Sigmoid colon (tissue), 7 donors: ENCODE measurements at regions of chr14 and their contacts with region 1.

Region 1: DNA sequence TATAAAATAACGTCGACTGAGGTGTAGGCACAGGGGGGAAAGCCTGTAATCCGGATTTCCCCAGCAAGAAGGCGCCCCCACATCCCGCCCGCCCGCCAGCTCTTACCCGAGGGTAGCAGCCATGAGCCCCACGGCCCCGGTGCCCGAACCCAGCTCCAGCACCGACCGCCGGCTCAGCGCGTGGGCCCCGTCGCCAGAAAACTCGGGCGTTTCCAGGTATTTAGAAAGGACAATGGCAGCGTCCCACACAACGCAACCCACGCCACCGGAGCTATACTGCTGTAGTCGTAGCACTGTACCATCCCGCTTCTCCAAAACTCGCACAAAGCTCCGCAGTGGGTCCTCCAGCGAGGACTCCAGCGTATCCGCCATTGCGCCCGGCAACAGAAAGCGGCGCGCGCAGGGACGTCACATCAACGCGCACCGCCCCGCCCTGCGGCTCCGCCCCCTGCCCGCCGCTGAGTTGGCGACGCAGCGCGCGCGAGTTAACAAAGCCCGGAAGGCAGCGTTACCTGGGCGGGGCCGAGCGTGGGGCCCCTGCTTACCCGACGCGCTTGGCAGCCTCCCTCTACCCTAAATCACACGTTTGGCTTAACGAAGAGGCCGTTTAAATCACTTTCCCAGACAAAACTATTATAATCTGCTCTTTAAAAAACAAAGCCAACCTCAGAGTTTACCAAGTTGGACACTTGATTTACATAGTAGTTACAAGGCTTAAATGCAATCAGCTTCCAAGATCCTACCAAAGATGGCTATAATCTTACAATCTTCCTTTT is at the start of gene VCPKMT:
- DNase-seq: peak; percentile 97
- H3K4me3 ChIP-seq: peak within 1 kb of the TSS; percentile 55 to 86 (median 78)
- H3K27ac ChIP-seq: peak within 1 kb of the TSS; percentile 81 to 92 (median 88)
- H3K4me1 ChIP-seq: peaks cover 0 to 24% (median 17%) of the 10 kb centered on the region in 4 donors
- H3K27me3 ChIP-seq: no peaks in the 10 kb centered on the region
- CTCF ChIP-seq: no peak
- EP300 ChIP-seq: peak in 1 of 4 donors; percentile 48
- POLR2A ChIP-seq: peak; percentile 77 to 79
- total RNA-seq, gene VCPKMT: 7.8 to 12.2 (median 9.4) TPM

Region 2: GRCh38 chr14:49767562-49768300 is 348.6 kb before region 1 on chr14 and contains the start of gene KLHDC2:
- intact Hi-C with region 1: loop called (anchors 10 kb)
- DNase-seq: peak; percentile 93
- H3K4me3 ChIP-seq: peak within 1 kb of the TSS; percentile 75 to 100 (median 87)
- H3K27ac ChIP-seq: peak within 1 kb of the TSS; percentile 93 to 99 (median 98)
- H3K4me1 ChIP-seq: peaks cover 0 to 30% (median 28%) of the 10 kb centered on the region in 4 donors
- H3K27me3 ChIP-seq: no peaks in the 10 kb centered on the region
- CTCF ChIP-seq: peak in 1 of 4 experiments; percentile 18
- EP300 ChIP-seq: no peak
- POLR2A ChIP-seq: no peak
- total RNA-seq, gene KLHDC2: 80.9 to 111 (median 96.4) TPM

Region 3: DNA sequence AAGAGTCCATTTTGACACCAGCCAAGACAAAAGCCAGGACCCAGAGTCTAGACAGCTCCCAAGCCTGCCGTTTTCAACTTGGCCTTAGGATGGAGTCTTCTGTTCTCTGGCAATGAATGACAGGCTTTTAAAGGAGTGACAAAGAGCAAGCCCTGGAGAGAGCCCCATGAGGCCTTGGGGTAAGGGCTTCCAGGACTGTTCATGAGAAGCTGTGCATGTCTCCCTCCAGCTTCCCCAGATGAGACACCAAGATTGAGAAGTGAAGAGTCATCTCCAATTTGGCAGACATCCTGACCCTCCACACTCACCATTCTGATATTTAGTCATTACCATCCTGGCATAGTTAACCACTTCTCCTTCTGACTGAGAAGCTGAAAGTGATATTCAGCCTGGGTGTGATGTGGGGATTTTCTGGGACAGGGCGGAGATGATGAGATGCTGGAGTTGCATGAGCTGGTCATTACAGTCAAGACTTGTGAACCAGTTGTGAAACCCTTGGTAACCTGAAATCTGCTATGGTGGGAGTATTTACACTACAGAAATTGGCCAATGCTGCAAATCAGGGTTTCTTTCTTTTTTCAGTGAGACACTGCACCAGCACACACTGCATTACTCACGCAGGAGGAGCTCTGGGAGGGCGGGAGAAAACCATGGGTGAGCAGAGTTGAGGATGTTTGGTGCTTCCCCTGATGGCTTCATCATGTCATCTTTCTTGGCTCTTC is 77.8 kb before region 1 on chr14:
- intact Hi-C with region 1: no loop called
- DNase-seq: no peak
- H3K4me3 ChIP-seq: no peak overlapping the region
- H3K27ac ChIP-seq: peak overlapping the region; percentile 11 to 79 (median 70)
- H3K4me1 ChIP-seq: peaks cover 0 to 33% (median 20%) of the 10 kb centered on the region in 4 donors
- H3K27me3 ChIP-seq: no peaks in the 10 kb centered on the region
- CTCF ChIP-seq: no peak
- EP300 ChIP-seq: no peak
- POLR2A ChIP-seq: no peak

Region 4: DNA sequence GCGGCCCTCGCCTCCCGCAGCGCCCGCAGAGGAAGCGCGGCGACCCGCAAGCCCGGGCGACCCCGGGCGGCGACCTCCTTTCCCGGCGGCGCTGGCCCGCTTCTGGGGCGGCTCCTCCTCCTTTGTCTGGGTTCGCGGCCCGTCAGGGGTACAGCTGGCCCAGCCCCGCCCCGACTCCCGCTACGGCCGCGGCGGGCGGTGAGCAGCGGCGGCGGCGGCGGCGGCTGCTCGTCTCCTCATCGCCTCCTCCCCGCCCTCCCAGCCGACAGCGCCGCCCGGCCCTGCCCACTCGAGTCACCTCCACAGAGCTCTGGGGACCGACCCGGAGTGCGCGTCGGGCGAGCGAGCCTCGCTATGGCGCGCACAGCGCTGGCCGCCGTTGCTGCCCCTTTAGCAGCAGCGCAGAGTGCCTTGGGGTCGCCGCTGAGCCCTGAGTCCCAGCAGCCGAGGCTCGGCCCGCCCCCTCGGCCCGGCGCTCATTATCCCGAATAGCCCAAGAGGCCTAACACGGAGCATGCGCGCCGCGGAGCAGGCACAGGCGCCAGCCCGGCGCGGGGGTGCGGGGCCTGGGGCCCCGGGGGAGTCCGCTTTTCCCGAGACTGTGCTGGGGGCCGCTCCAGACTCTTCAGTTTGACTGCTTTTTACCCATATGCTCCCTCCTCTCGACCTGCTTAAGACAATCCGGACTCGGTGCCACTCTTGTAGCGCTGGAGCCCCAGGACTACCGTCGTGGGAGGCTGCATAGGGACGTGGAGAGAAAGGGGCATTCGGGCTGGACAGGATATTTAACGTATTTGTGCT is 115.3 kb after region 1 on chr14 and contains the start of gene SOS2:
- intact Hi-C with region 1: loop called (anchors 5 kb)
- DNase-seq: peak; percentile 94
- H3K4me3 ChIP-seq: peak within 1 kb of the TSS; percentile 59 to 89 (median 70)
- H3K27ac ChIP-seq: peak within 1 kb of the TSS; percentile 95 to 99 (median 98)
- H3K4me1 ChIP-seq: peaks cover 0 to 53% (median 38%) of the 10 kb centered on the region in 4 donors
- H3K27me3 ChIP-seq: no peaks in the 10 kb centered on the region
- CTCF ChIP-seq: no peak
- EP300 ChIP-seq: no peak
- POLR2A ChIP-seq: peak; percentile 12 to 49
- total RNA-seq, gene SOS2: 31.9 to 40.4 (median 38.7) TPM